GM10248 (cell line): ENCODE measurements at regions of chr15 and their contacts with region 1.

Region 1: DNA sequence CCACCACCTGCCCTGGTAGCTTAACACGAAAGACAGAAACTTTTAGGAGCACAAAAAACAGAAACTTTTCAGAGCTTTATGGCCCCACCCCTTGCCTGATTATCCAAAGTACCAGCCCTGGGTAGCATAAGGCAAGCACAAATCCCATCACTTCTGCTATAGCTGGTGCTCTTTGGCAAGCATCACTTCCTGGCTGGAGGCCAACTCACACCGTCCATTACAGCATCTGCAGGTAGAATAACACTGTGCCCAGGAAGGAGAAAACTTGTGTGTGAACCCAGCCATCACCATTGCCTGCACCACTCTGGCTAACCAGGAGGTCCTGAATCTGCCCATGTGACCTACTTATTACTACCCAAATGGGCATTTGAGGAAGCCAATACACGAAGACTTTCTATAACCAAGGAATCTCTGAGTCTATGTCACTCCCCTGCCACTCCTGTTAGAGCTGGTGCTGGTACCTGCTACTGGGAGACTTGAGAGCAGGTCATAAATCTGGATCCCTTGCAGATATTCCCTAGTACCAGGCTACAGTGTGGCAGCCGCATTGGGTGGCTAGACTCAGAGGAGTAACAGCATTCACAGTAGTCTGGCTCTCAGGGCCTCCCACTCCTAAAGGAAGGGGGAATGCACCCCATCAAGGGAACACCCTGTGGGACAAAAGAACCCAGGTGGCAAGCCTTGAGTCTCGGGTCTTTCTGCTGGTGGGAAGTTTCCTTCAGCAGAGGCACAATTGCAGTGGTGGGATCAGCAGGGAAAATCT is 73.3 kb upstream of the AKAP13 start:
- DNase-seq: no peak
- CTCF ChIP-seq: no peak

Region 2: GRCh38 chr15:85289677-85290365 is 17.3 kb before region 1 on chr15:
- CTCF ChIA-PET with region 1: interaction called, 28 read pairs
- POLR2A ChIA-PET with region 1: no interaction called
- DNase-seq: peak; percentile 41
- CTCF ChIP-seq: peak; percentile 45

Region 3: DNA sequence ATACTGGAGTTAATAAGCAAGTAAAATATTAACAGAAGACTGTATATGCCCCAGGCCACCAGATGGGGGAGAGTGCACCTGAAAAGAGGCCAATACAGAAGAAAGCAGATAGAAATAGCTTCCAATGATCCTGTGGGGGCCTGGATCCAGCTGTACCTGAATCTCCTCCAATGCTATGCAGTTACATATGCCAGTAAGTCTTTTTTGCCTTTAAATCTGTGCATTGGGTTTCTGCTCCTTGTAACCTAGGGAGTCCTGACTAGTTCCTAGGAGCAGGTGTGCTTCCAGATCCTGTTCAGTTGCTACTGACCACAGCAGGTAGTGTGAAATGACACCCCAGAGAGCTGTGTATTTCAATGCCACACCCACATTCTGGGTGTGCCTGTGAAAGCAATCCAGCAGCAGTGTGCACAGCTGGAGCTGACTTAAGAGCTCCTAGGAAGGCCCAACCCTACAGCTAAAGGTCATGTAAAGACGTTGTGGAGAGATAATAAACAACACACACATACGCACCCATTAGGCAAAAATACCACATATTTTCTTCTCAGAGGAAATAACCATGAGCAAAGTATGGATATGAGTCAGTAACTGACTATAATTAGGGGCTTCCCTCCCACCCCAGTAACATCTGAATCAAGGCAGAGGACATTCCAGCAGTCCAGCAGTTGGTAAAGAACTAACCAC is 11.1 kb after region 1 on chr15:
- CTCF ChIA-PET with region 1: interaction called, 17 read pairs
- POLR2A ChIA-PET with region 1: no interaction called
- DNase-seq: peak; percentile 68
- CTCF ChIP-seq: peak; percentile 19